PC-9 (cell line): ENCODE measurements at regions of chr21 and their contacts with region 1.

Region 1: GRCh38 chr21:32257962-32258785 is 20.7 kb downstream of the MIS18A start:
- DNase-seq: peak; percentile 42 to 65
- H3K4me3 ChIP-seq: no peak overlapping the region
- H3K27ac ChIP-seq: no peak overlapping the region
- H3K4me1 ChIP-seq: no peaks in the 10 kb centered on the region
- H3K27me3 ChIP-seq: peaks cover 7% of the 10 kb centered on the region; the same call in 1 of the 2 replicates
- CTCF ChIP-seq: peak; percentile 76

Region 2: GRCh38 chr21:30366157-30366556 is 1892.0 kb before region 1 on chr21:
- CTCF ChIA-PET with region 1: no interaction called
- POLR2A ChIA-PET with region 1: interaction called, 10 read pairs
- intact Hi-C with region 1: no loop called
- DNase-seq: no peak
- H3K4me3 ChIP-seq: no peak overlapping the region
- H3K27ac ChIP-seq: no peak overlapping the region
- H3K4me1 ChIP-seq: no peaks in the 10 kb centered on the region
- H3K27me3 ChIP-seq: no peaks in the 10 kb centered on the region
- CTCF ChIP-seq: no peak

Region 3: GRCh38 chr21:31098576-31099005 is 1159.6 kb before region 1 on chr21:
- CTCF ChIA-PET with region 1: no interaction called
- POLR2A ChIA-PET with region 1: no interaction called
- intact Hi-C with region 1: loop called (anchors 10 kb)
- DNase-seq: peak in 1 of 2 experiments; percentile 43
- H3K4me3 ChIP-seq: no peak overlapping the region
- H3K27ac ChIP-seq: no peak overlapping the region
- H3K4me1 ChIP-seq: no peaks in the 10 kb centered on the region
- H3K27me3 ChIP-seq: no peaks in the 10 kb centered on the region
- CTCF ChIP-seq: peak; percentile 74

Region 4: GRCh38 chr21:31786164-31786920 is 471.8 kb before region 1 on chr21:
- CTCF ChIA-PET with region 1: interaction called, 3 read pairs
- POLR2A ChIA-PET with region 1: no interaction called
- intact Hi-C with region 1: loop called (anchors 1 kb)
- DNase-seq: no peak
- H3K4me3 ChIP-seq: no peak overlapping the region
- H3K27ac ChIP-seq: no peak overlapping the region
- H3K4me1 ChIP-seq: no peaks in the 10 kb centered on the region
- H3K27me3 ChIP-seq: peaks cover 21% of the 10 kb centered on the region; the same call in 1 of the 2 replicates
- CTCF ChIP-seq: peak; percentile 21; the same call in 1 of the 2 replicates

Region 5: DNA sequence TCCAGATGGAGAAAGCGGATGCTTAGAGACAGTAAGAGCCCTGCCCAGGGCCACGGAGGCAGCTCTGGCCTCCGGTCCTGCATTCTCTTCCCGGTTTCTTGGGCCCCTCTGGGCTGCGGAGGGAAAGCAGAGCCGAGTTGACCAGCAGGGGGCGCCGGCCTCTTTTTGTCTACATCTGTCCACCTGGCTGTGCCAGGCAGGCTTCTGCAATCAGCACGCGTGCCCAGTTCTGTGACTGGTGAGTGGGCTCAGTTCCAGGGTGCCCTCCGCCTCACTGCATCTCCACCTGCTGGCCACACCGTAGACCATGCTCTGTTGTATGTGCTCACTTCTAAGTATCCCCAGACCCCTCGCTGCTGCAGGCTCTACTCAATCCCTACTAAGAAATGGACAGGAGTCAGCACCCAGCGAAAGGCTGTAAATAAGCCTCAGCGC is 392.1 kb before region 1 on chr21:
- CTCF ChIA-PET with region 1: no interaction called
- POLR2A ChIA-PET with region 1: no interaction called
- intact Hi-C with region 1: loop called (anchors 1 kb)
- DNase-seq: peak in 1 of 2 experiments; percentile 49
- H3K4me3 ChIP-seq: no peak overlapping the region
- H3K27ac ChIP-seq: no peak overlapping the region
- H3K4me1 ChIP-seq: no peaks in the 10 kb centered on the region
- H3K27me3 ChIP-seq: peaks cover 31% of the 10 kb centered on the region; the same call in 1 of the 2 replicates
- CTCF ChIP-seq: peak; percentile 71

Region 6: GRCh38 chr21:31964692-31965091 is 293.5 kb before region 1 on chr21:
- CTCF ChIA-PET with region 1: no interaction called
- POLR2A ChIA-PET with region 1: no interaction called
- intact Hi-C with region 1: no loop called
- DNase-seq: no peak
- H3K4me3 ChIP-seq: no peak overlapping the region
- H3K27ac ChIP-seq: no peak overlapping the region
- H3K4me1 ChIP-seq: no peaks in the 10 kb centered on the region
- H3K27me3 ChIP-seq: peaks cover 57% of the 10 kb centered on the region
- CTCF ChIP-seq: no peak

Region 7: DNA sequence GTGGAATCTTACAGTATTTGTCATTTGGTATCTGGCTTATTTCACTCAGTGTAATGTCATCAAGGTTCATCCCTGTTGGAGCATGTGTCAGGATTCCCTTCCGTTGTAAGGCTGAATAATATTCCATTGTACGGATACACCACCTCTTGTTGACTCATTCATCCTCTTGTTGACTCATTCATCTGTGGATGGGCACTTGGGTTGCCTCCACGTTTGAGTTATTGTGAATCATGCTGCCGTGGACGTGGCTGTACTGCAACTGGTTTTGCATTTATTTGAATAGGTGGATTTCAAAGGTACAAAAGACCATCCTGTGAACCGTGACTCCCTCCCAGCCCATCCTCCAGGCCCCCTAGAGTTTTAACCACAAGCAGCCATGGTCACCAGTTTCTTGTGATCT is 339.0 kb after region 1 on chr21:
- CTCF ChIA-PET with region 1: no interaction called
- POLR2A ChIA-PET with region 1: no interaction called
- intact Hi-C with region 1: loop called (anchors 1 kb)
- DNase-seq: peak in 1 of 2 experiments; percentile 34
- H3K4me3 ChIP-seq: no peak overlapping the region
- H3K27ac ChIP-seq: no peak overlapping the region
- H3K4me1 ChIP-seq: no peaks in the 10 kb centered on the region
- H3K27me3 ChIP-seq: no peaks in the 10 kb centered on the region
- CTCF ChIP-seq: no peak